Heart left ventricle (tissue), 16 donors: ENCODE measurements at regions of chr14 and their contacts with region 1.

Region 1: GRCh38 chr14:21557084-21557901 is 22.6 kb downstream of the OR10G3 start:
- DNase-seq: peak in 4 of 5 donors; percentile 50 to 71 (median 62)
- ATAC-seq: peak; percentile 65 to 87 (median 74)
- H3K4me3 ChIP-seq: peak overlapping the region in 10 of 12 donors; percentile 23 to 50 (median 38)
- H3K27ac ChIP-seq: peak overlapping the region in 7 of 12 donors; percentile 8 to 79 (median 30)
- H3K4me1 ChIP-seq: peaks cover 0 to 18% (median 0%) of the 10 kb centered on the region in 12 donors
- H3K27me3 ChIP-seq: no peaks in the 10 kb centered on the region
- CTCF ChIP-seq: peak; percentile 60 to 83 (median 74)
- POLR2A ChIP-seq: no peak

Region 2: GRCh38 chr14:21229821-21230220 is 327.5 kb before region 1 on chr14:
- intact Hi-C with region 1: no loop called
- DNase-seq: no peak
- ATAC-seq: no peak
- H3K4me3 ChIP-seq: no peak overlapping the region
- H3K27ac ChIP-seq: peak overlapping the region in 1 of 12 donors; percentile 7
- H3K4me1 ChIP-seq: peaks cover 0 to 67% (median 49%) of the 10 kb centered on the region in 12 donors
- H3K27me3 ChIP-seq: no peaks in the 10 kb centered on the region
- CTCF ChIP-seq: no peak
- POLR2A ChIP-seq: no peak

Region 3: GRCh38 chr14:21437063-21437901 is 120.0 kb before region 1 on chr14:
- intact Hi-C with region 1: loop called in 2 of 10 experiments (anchors 5 kb)
- DNase-seq: peak; percentile 99 to 100 (median 99)
- ATAC-seq: peak; percentile 99 to 100 (median 100)
- H3K4me3 ChIP-seq: peak overlapping the region; percentile 47 to 96 (median 86)
- H3K27ac ChIP-seq: peak overlapping the region; percentile 83 to 95 (median 90)
- H3K4me1 ChIP-seq: peaks cover 0 to 39% (median 23%) of the 10 kb centered on the region in 12 donors
- H3K27me3 ChIP-seq: no peaks in the 10 kb centered on the region
- CTCF ChIP-seq: no peak
- POLR2A ChIP-seq: peak in 1 of 2 donors; percentile 77

Region 4: GRCh38 chr14:21476925-21477681 is 80.2 kb before region 1 on chr14 and contains the starts of genes RAB2B and TOX4:
- intact Hi-C with region 1: loop called in 2 of 10 experiments (anchors 1 kb)
- DNase-seq: peak; percentile 95 to 97 (median 97)
- ATAC-seq: peak; percentile 99 to 100 (median 100)
- H3K4me3 ChIP-seq: peak within 1 kb of the TSS; percentile 59 to 98 (median 84)
- H3K27ac ChIP-seq: peak within 1 kb of the TSS; percentile 14 to 90 (median 84)
- H3K4me1 ChIP-seq: peaks cover 7 to 36% (median 19%) of the 10 kb centered on the region in 12 donors
- H3K27me3 ChIP-seq: no peaks in the 10 kb centered on the region
- CTCF ChIP-seq: peak; percentile 86 to 99 (median 94)
- POLR2A ChIP-seq: peak in 1 of 2 donors; percentile 77
- total RNA-seq, gene RAB2B: 13.3 to 24.5 (median 17.2) TPM
- total RNA-seq, gene TOX4: 51.1 to 100 (median 87.4) TPM

Region 5: DNA sequence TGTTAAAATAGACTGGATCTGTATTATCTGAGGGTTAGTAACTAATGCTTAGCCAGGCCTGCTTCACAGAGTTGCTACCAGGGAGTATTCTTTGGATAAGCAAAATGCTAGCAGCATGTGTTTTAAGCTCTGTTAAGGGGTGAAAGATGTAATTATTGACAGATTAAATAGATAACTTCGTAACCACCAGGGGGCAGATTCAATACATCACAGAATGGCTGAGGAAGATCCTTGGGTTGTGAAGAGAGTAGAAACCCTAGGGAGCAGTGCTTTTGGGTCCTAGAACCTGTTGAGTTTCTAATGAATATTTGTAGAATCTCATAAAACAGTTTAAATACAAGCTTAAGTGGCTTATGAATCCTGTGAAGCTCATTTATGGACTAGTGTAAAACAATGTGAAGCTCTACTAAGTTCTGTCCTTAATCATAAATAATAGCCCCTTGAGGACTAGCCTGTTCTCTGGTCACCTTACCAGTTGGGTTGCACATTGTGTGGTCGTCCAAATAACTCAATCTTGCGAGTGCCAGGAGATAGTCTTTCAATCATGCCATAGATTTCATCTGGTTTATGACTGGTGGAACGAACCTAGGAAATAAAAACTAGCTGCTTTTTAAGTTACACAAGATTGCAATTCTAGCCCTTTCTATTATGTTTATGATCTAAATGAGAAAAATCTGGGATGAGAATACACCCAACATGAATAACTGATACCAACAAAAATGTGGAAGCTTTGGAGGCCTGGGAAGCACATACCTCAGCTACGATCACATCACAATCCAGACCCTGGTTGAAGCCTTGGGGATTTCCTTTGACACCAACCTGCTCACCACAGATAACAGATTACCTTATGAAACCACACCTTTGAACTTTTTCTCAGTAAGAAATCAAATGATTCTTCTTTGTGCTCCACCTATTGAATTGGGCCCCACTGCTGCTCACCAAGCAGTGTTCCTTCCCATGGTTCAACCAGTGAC is 58.5 kb before region 1 on chr14:
- intact Hi-C with region 1: loop called in 7 of 10 experiments (anchors 2 to 10 kb)
- DNase-seq: no peak
- ATAC-seq: peak in 1 of 4 donors; percentile 30
- H3K4me3 ChIP-seq: no peak overlapping the region
- H3K27ac ChIP-seq: no peak overlapping the region
- H3K4me1 ChIP-seq: no peaks in the 10 kb centered on the region
- H3K27me3 ChIP-seq: no peaks in the 10 kb centered on the region
- CTCF ChIP-seq: peak in 10 of 12 donors; percentile 19 to 59 (median 44)
- POLR2A ChIP-seq: no peak

Region 6: GRCh38 chr14:21505012-21505553 is 52.2 kb before region 1 on chr14:
- intact Hi-C with region 1: loop called in 6 of 10 experiments (anchors 5 to 10 kb)
- DNase-seq: no peak
- ATAC-seq: no peak
- H3K4me3 ChIP-seq: no peak overlapping the region
- H3K27ac ChIP-seq: peak overlapping the region in 1 of 12 donors; percentile 8
- H3K4me1 ChIP-seq: peaks cover 0 to 29% (median 10%) of the 10 kb centered on the region in 12 donors
- H3K27me3 ChIP-seq: no peaks in the 10 kb centered on the region
- CTCF ChIP-seq: no peak
- POLR2A ChIP-seq: no peak

Region 7: DNA sequence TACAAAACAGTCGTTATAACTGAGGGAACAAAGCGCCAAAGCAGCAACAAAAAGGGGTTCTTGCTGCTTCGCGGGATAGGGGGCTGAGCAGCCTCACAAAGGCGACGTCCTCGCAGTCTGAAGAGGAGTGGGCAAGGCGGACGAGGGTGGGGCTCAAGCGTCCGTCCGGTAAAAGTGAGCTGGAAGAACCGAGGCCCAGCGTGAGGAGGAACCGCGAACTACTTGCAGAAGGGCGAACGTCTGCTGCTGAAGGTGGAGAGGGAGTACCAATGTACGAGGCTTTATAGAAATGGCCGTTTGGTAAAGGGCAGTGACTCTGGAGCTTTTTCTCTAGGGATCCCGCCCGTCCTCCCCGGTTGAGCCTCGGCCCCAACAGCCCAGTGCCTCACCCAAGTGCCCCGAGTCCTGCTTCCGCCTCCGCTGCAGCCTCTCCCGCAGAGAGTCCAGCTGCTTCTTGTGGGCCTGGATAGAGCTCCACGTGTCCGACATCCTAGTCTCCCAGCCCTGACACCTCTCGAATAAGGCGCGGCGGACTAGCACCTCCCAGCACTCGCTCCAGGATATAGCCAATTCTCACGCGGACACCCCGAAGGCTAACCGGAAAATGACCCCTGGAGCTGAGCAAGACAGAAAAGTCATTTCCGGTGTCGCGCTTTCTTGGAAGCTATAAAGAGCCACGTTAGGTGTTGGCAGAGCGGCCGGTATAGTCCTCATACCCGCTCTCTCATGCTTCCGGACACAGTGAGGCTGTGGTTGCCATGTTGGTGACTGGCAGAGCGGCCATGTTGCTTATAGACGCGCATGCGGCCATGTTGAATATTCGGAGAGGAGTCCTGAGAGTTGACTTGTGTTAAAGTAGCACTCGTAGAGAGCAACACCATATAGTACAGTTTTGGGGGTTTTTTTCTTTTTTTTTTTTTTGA is 46.3 kb before region 1 on chr14 and contains the start of gene METTL3:
- intact Hi-C with region 1: loop called in 5 of 10 experiments (anchors 5 to 10 kb)
- DNase-seq: peak; percentile 96 to 99 (median 98)
- ATAC-seq: peak; percentile 99 to 100 (median 100)
- H3K4me3 ChIP-seq: peak within 1 kb of the TSS; percentile 64 to 94 (median 82)
- H3K27ac ChIP-seq: peak within 1 kb of the TSS; percentile 55 to 92 (median 82)
- H3K4me1 ChIP-seq: peaks cover 0 to 28% (median 13%) of the 10 kb centered on the region in 12 donors
- H3K27me3 ChIP-seq: no peaks in the 10 kb centered on the region
- CTCF ChIP-seq: peak in 1 of 12 donors; percentile 7
- POLR2A ChIP-seq: no peak
- total RNA-seq, gene METTL3: 21.0 to 37.0 (median 25.2) TPM